ENCODE measurements at regions of chr2 and their contacts with region 1.

Region 1: GRCh38 chr2:216692636-216693413 is 2.5 kb downstream of the IGFBP5 start:
- DNase-seq: peak in 1 of 2 experiments; percentile 77
- H3K4me3 ChIP-seq: peak overlapping the region; percentile 49; the same call in 1 of the 2 replicates
- H3K27ac ChIP-seq: no peak overlapping the region
- H3K4me1 ChIP-seq: peaks cover 3% of the 10 kb centered on the region; the same call in 1 of the 2 replicates
- H3K27me3 ChIP-seq: no peaks in the 10 kb centered on the region
- CTCF ChIP-seq: no peak

Region 2: GRCh38 chr2:216108967-216109921 is 583.6 kb before region 1 on chr2 and contains the start of gene XRCC5:
- CTCF ChIA-PET with region 1: interaction called, 11 read pairs
- POLR2A ChIA-PET with region 1: no interaction called
- intact Hi-C with region 1: no loop called
- DNase-seq: peak; percentile 92 to 97
- H3K4me3 ChIP-seq: peak within 1 kb of the TSS; percentile 71
- H3K27ac ChIP-seq: peak within 1 kb of the TSS; percentile 54
- H3K4me1 ChIP-seq: peaks cover 18% of the 10 kb centered on the region
- H3K27me3 ChIP-seq: no peaks in the 10 kb centered on the region
- CTCF ChIP-seq: no peak
- total RNA-seq, gene XRCC5: 242 and 275 TPM in 2 replicates

Region 3: GRCh38 chr2:216672996-216673395 is 19.8 kb before region 1 on chr2:
- CTCF ChIA-PET with region 1: no interaction called
- POLR2A ChIA-PET with region 1: no interaction called
- intact Hi-C with region 1: no loop called
- DNase-seq: no peak
- H3K4me3 ChIP-seq: no peak overlapping the region
- H3K27ac ChIP-seq: no peak overlapping the region
- H3K4me1 ChIP-seq: no peaks in the 10 kb centered on the region
- H3K27me3 ChIP-seq: no peaks in the 10 kb centered on the region
- CTCF ChIP-seq: no peak

Region 4: GRCh38 chr2:217095511-217096205 is 402.8 kb after region 1 on chr2:
- CTCF ChIA-PET with region 1: no interaction called
- POLR2A ChIA-PET with region 1: no interaction called
- intact Hi-C with region 1: loop called (anchors 1 kb)
- DNase-seq: peak in 1 of 2 experiments; percentile 62
- H3K4me3 ChIP-seq: no peak overlapping the region
- H3K27ac ChIP-seq: no peak overlapping the region
- H3K4me1 ChIP-seq: peaks cover 10% of the 10 kb centered on the region; the same call in 1 of the 2 replicates
- H3K27me3 ChIP-seq: no peaks in the 10 kb centered on the region
- CTCF ChIP-seq: no peak

Region 5: GRCh38 chr2:217231212-217231611 is 538.4 kb after region 1 on chr2:
- CTCF ChIA-PET with region 1: no interaction called
- POLR2A ChIA-PET with region 1: no interaction called
- intact Hi-C with region 1: loop called (anchors 5 kb)
- DNase-seq: peak in 1 of 2 experiments; percentile 88
- H3K4me3 ChIP-seq: no peak overlapping the region
- H3K27ac ChIP-seq: peak overlapping the region; percentile 70
- H3K4me1 ChIP-seq: peaks cover 33% of the 10 kb centered on the region
- H3K27me3 ChIP-seq: no peaks in the 10 kb centered on the region
- CTCF ChIP-seq: no peak